HCT116 (cell line): ENCODE measurements at regions of chr9 and their contacts with region 1.

Region 1: GRCh38 chr9:71768388-71769174 is at the start of gene CEMIP2:
- DNase-seq: peak; percentile 62
- ATAC-seq: peak; percentile 82
- H3K4me3 ChIP-seq: peak within 1 kb of the TSS; percentile 76 to 82
- H3K27ac ChIP-seq: peak within 1 kb of the TSS; percentile 79
- H3K4me1 ChIP-seq: peaks cover 21 to 46% of the 10 kb centered on the region in 2 experiments
- H3K27me3 ChIP-seq: no peaks in the 10 kb centered on the region
- CTCF ChIP-seq: peak in 2 of 3 experiments; percentile 29 to 43; a peak in 4 of 6 replicates
- POLR2A ChIP-seq: peak; percentile 42
- RAD21 ChIP-seq: peak; percentile 68
- total RNA-seq, gene CEMIP2: 14.3 TPM

Region 2: GRCh38 chr9:71604197-71605063 is 164.2 kb before region 1 on chr9:
- CTCF ChIA-PET with region 1: interaction called, 6 read pairs
- POLR2A ChIA-PET with region 1: no interaction called
- RAD21 ChIA-PET with region 1: no interaction called
- intact Hi-C with region 1: loop called (anchors 1 kb)
- DNase-seq: peak; percentile 37
- ATAC-seq: peak; percentile 94
- H3K4me3 ChIP-seq: no peak overlapping the region
- H3K27ac ChIP-seq: no peak overlapping the region
- H3K4me1 ChIP-seq: no peaks in the 10 kb centered on the region
- H3K27me3 ChIP-seq: no peaks in the 10 kb centered on the region
- CTCF ChIP-seq: peak; percentile 81 to 83 (median 82)
- POLR2A ChIP-seq: no peak
- RAD21 ChIP-seq: peak; percentile 81

Region 3: DNA sequence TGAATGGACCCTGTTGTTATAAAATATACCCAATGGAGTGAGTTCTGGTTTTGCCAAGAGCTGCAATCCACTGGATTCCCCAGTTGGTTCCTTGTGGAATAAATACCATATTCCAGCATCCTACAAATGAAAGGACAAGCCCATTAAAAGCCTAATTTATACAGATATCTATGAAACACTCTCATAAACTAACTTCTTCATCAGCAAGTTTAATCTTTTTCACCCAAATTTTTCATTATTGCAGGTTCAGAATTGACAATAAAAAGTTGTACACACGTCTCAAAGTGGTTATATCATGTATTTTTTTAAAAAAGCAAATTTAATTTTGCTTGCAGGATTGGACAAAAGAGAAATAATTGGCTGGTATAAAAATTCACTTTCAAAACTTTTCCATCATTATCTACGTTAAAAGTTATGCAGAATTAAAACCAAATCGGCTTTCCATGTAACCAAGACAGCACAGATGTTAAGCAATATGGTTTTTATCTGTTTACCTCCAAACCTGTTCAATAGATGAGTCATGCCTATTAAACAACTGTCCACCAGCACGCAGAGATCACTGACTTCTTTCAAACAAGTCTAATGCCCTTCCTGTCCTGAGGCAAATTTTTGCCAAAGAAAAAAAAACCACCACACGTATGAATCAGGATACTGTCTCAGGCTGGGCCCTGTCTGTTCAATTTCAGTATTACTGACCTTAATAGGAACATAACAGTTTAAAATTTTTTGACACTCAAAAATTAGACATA is 42.8 kb before region 1 on chr9:
- CTCF ChIA-PET with region 1: no interaction called
- POLR2A ChIA-PET with region 1: no interaction called
- RAD21 ChIA-PET with region 1: no interaction called
- intact Hi-C with region 1: no loop called
- DNase-seq: peak; percentile 79
- ATAC-seq: peak; percentile 89
- H3K4me3 ChIP-seq: no peak overlapping the region
- H3K27ac ChIP-seq: no peak overlapping the region
- H3K4me1 ChIP-seq: peaks cover 9 to 17% of the 10 kb centered on the region in 2 experiments; a peak in 3 of 4 replicates
- H3K27me3 ChIP-seq: no peaks in the 10 kb centered on the region
- CTCF ChIP-seq: no peak
- POLR2A ChIP-seq: no peak
- RAD21 ChIP-seq: no peak

Region 4: GRCh38 chr9:71911253-71912074 is 142.9 kb after region 1 on chr9 and contains the start of gene C9orf85:
- CTCF ChIA-PET with region 1: no interaction called
- POLR2A ChIA-PET with region 1: no interaction called
- RAD21 ChIA-PET with region 1: no interaction called
- intact Hi-C with region 1: no loop called
- DNase-seq: peak; percentile 99
- ATAC-seq: peak; percentile 92
- H3K4me3 ChIP-seq: peak within 1 kb of the TSS; percentile 77 to 89
- H3K27ac ChIP-seq: peak within 1 kb of the TSS; percentile 90
- H3K4me1 ChIP-seq: peaks cover 5 to 16% of the 10 kb centered on the region in 2 experiments
- H3K27me3 ChIP-seq: no peaks in the 10 kb centered on the region
- CTCF ChIP-seq: no peak
- POLR2A ChIP-seq: peak; percentile 56
- RAD21 ChIP-seq: no peak
- total RNA-seq, gene C9orf85: 12.4 TPM